ENCODE measurements at regions of chr2 and their contacts with region 1.

Region 1: GRCh38 chr2:181058378-181059269 is 78.2 kb downstream of the UBE2E3 start:
- DNase-seq: no peak
- CTCF ChIP-seq: peak; percentile 80

Region 2: GRCh38 chr2:180125245-180125962 is 933.2 kb before region 1 on chr2:
- CTCF ChIA-PET with region 1: interaction called, 86 read pairs
- POLR2A ChIA-PET with region 1: no interaction called
- DNase-seq: peak; percentile 28
- CTCF ChIP-seq: peak; percentile 53

Region 3: DNA sequence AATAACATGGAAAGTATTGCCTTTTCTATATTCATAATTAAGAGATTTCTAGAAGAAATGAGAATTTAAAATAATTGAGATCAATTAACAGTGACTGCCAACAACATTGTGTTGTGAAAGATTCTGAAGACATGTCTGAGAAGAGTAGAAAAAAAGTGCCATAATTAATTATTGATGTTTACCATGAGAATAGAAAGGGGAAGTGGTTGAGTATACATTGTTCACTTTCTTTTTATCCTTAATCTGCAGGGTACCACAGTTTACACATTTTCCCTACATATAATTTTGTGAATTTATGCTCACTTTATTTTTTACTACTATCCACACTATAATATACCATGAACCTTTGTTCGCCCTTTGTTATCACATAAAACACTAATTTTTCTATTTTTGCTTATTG is 125.3 kb before region 1 on chr2:
- CTCF ChIA-PET with region 1: no interaction called
- POLR2A ChIA-PET with region 1: no interaction called
- DNase-seq: no peak
- CTCF ChIP-seq: no peak

Region 4: DNA sequence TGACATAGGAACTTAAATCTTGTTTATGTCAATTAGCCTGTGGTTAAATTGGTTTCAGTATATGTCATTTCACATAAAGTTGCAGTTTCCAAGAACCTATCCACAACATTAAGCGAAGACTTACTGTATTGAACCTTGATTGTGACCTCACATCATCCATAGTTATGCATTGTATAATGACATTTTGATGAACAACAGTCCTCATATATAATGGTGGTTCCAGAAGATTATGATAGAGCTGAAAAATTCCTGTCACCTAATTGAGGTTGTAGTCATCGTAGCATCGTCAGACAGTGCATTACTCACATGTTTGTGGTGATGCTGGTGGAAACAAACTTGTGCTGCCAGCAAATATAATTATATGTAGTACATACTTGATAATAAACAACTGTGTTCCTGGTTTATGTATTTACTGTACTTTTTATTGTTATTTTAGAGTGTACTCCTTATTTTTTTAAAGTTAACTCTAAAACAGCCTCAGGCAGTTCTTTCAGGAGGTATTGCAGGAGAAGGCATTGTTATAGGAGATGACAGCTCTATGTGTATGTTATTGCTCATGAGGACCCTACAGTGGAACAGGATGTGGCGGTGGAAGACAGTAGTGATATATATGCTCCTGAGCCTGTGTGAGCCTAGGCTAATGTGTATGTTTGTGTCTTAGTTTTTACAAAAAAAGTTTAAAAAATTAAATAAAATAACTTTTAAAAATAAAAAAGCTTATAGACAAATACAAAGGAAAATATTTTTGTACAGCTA is 21.6 kb before region 1 on chr2:
- CTCF ChIA-PET with region 1: interaction called, 18 read pairs
- POLR2A ChIA-PET with region 1: no interaction called
- DNase-seq: no peak
- CTCF ChIP-seq: no peak

Region 5: DNA sequence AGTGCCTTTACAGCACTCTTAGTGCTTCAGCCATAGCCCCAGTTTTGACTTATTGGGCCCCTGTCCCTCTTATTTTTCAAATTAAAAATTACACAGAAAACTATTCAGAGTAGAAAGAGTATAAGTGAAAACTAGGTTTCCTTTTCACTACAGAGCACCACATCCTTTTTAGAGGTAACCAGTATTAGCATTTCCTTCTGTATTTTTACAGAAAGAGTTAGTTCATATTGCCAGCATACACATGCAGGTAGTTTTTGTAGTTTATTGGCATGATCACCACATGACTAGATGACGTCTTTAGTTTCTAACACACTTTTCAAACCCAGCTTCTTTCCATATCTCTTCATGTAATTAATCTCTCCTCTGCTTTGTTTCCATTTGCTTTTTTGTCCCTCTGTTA is 11.8 kb before region 1 on chr2:
- CTCF ChIA-PET with region 1: interaction called, 50 read pairs
- POLR2A ChIA-PET with region 1: no interaction called
- DNase-seq: no peak
- CTCF ChIP-seq: no peak

Region 6: GRCh38 chr2:181070119-181070835 is 11.7 kb after region 1 on chr2:
- CTCF ChIA-PET with region 1: interaction called, 15 read pairs
- POLR2A ChIA-PET with region 1: no interaction called
- DNase-seq: no peak
- CTCF ChIP-seq: no peak

Region 7: GRCh38 chr2:181563101-181563692 is 504.6 kb after region 1 on chr2:
- CTCF ChIA-PET with region 1: no interaction called
- POLR2A ChIA-PET with region 1: no interaction called
- DNase-seq: no peak
- CTCF ChIP-seq: no peak